ENCODE measurements at regions of chr10 and their contacts with region 1.

Region 1: GRCh38 chr10:42552493-42553407 is 85.6 kb downstream of the ZNF33B start:
- DNase-seq: peak; percentile 89 to 95 (median 91)
- H3K4me3 ChIP-seq: peak overlapping the region; percentile 62 to 99 (median 88)
- H3K4me3 Mint-ChIP-seq: peak overlapping the region; percentile 95 to 98
- H3K27ac ChIP-seq: peak overlapping the region; percentile 1 to 79
- H3K27ac Mint-ChIP-seq: peak overlapping the region; percentile 78 to 90 (median 83)
- H3K4me1 ChIP-seq: peaks cover 15 to 23% of the 10 kb centered on the region in 2 donors
- H3K4me1 Mint-ChIP-seq: peaks cover 28% of the 10 kb centered on the region
- H3K27me3 ChIP-seq: no peaks in the 10 kb centered on the region
- H3K27me3 Mint-ChIP-seq: peaks cover 4 to 10% (median 5%) of the 10 kb centered on the region in 3 donors
- CTCF ChIP-seq: no peak

Region 2: GRCh38 chr10:42454313-42454712 is 98.4 kb before region 1 on chr10:
- intact Hi-C with region 1: no loop called
- DNase-seq: no peak
- H3K4me3 ChIP-seq: no peak overlapping the region
- H3K4me3 Mint-ChIP-seq: no peak overlapping the region
- H3K27ac ChIP-seq: no peak overlapping the region
- H3K27ac Mint-ChIP-seq: no peak overlapping the region
- H3K4me1 ChIP-seq: no peaks in the 10 kb centered on the region
- H3K4me1 Mint-ChIP-seq: no peaks in the 10 kb centered on the region
- H3K27me3 ChIP-seq: no peaks in the 10 kb centered on the region
- H3K27me3 Mint-ChIP-seq: peaks cover 0 to 3% (median 0%) of the 10 kb centered on the region in 3 donors
- CTCF ChIP-seq: no peak

Region 3: DNA sequence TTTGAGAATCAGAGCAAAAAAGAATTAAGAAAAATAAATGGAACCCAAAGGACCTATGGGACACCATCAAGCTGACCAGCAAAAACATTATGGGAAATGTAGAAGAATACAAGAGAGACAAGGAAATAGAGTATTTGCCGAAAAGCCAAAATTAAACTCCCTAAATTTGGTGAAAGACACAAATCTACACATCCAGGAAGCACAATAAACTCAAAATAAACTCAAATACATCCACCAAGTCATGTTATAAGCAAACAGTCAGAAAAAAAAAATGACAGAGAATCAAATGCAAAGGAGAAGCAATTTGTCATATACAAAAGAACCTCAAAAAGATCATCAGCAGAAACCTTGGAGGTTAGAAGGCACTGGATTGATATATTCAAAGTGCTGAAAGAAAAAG is 19.8 kb before region 1 on chr10:
- intact Hi-C with region 1: no loop called
- DNase-seq: no peak
- H3K4me3 ChIP-seq: no peak overlapping the region
- H3K4me3 Mint-ChIP-seq: no peak overlapping the region
- H3K27ac ChIP-seq: no peak overlapping the region
- H3K27ac Mint-ChIP-seq: no peak overlapping the region
- H3K4me1 ChIP-seq: no peaks in the 10 kb centered on the region
- H3K4me1 Mint-ChIP-seq: no peaks in the 10 kb centered on the region
- H3K27me3 ChIP-seq: no peaks in the 10 kb centered on the region
- H3K27me3 Mint-ChIP-seq: no peaks in the 10 kb centered on the region
- CTCF ChIP-seq: no peak

Region 4: DNA sequence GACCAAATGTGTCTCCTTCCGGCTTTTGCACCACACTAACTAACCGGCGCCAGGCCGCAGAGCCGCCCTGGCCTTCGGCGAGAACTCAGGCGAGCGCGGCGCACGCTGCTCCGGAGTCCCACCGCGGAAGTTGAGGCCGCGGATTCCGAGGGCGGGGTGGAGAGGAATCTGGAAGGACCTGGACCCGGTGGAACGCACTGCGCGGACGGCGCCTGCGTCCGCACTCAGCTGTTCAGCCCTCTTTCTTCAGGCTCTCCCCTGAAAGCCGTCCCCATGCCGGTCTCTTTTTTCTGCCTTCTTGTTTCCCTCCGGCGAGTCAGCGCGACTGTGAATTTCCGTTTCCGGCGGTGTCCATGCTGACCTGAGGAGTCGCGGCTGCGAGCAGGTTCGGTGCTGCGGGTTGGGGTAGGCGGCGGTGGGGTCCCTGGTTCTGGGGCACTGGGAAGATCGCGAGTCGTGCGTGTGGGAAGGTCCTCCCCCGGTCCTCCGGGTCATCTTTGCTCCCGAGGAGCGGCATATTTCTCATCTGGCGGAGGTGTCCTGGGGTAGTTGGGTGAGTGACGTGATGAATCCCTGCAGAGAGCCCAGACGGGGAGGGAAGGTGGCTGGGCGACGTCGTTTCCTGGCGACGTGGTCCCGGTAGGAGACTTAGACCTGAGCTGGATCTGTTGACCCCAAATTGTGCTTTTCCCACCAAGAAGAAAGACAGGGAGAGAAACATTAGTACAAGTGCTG is 229.9 kb after region 1 on chr10 and contains the start of gene BMS1:
- intact Hi-C with region 1: loop called in 1 of 2 experiments (anchors 10 kb)
- DNase-seq: peak; percentile 73 to 84 (median 74)
- H3K4me3 ChIP-seq: peak within 1 kb of the TSS; percentile 66 to 91 (median 80)
- H3K4me3 Mint-ChIP-seq: peak within 1 kb of the TSS; percentile 92 to 96
- H3K27ac ChIP-seq: peak within 1 kb of the TSS; percentile 77 to 91
- H3K27ac Mint-ChIP-seq: peak within 1 kb of the TSS; percentile 84 to 94 (median 92)
- H3K4me1 ChIP-seq: peaks cover 13 to 21% of the 10 kb centered on the region in 2 donors
- H3K4me1 Mint-ChIP-seq: peaks cover 19% of the 10 kb centered on the region
- H3K27me3 ChIP-seq: peaks cover 0 to 2% of the 10 kb centered on the region in 2 donors
- H3K27me3 Mint-ChIP-seq: peaks cover 2 to 12% (median 9%) of the 10 kb centered on the region in 3 donors
- CTCF ChIP-seq: no peak
- polyA plus RNA-seq, gene BMS1: 2.4 to 4.6 (median 2.9) TPM

Region 5: DNA sequence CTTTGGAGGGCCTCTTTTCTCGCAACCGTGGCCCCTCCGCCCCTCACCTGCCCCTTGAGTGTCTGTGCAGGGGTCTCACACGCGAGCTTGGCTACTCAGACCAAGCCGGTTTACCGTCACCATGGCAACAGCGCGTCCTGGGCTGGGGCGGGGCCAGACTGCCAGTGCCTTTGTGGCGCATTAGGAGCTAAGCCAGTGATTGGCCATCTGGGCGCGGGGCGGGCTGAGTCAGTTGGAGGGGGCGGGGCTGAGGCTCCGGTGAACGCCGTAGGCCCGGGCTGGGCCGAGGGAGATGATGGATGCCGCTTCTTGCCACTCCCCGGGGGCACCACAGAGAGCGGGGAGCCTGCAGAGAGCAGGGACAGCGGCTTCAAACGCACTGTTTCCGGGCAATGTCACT is 770.0 kb after region 1 on chr10:
- intact Hi-C with region 1: no loop called
- DNase-seq: peak; percentile 86 to 94 (median 94)
- H3K4me3 ChIP-seq: peak overlapping the region in 2 of 3 experiments; percentile 20 to 66
- H3K4me3 Mint-ChIP-seq: peak overlapping the region; percentile 58 to 80
- H3K27ac ChIP-seq: peak overlapping the region in 1 of 2 donors; percentile 36
- H3K27ac Mint-ChIP-seq: peak overlapping the region in 4 of 7 donors; percentile 42 to 89 (median 70)
- H3K4me1 ChIP-seq: peaks cover 16 to 19% of the 10 kb centered on the region in 2 donors
- H3K4me1 Mint-ChIP-seq: peaks cover 23% of the 10 kb centered on the region
- H3K27me3 ChIP-seq: no peaks in the 10 kb centered on the region
- H3K27me3 Mint-ChIP-seq: peaks cover 5 to 15% (median 10%) of the 10 kb centered on the region in 3 donors
- CTCF ChIP-seq: no peak

Region 6: DNA sequence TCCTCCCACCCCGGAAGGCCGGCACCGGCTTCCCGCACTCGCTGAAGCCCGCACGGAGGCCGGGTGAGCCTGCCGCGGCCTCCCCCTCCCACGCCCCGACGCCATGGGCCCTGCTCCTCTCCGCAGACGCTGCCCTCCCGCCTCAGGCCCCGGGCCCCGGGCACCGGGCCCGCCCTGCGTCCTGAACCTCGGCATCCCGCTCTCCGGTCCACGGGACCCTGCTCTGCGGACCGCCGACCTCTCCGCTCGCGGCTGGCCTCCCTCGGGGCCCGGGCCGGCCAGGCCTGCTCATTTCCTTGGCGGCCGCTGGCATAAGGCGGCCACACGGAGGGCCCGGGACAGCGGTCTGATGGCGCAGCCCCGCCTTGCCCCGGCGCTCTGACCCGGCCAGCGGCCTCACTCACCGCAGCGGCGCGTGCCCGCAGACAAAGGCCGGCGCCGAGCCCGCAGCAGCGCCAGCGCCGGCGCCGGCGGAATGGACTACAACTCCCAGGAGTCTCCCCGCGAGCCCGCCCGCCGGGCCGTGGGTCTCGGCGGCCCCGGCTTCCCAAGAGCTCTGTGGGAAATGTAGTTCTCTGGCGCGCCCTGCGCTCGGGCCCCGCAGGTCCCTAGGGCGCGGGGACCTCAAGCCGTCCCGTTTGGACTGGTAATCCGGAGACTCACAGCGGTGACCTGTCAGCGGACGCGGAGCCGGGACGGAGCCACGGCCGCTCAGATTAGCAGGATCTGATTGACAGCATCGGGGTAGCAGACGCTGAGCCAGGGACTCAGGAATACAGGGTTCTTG is 1095.8 kb after region 1 on chr10 and contains the start of gene ZNF32:
- intact Hi-C with region 1: loop called (anchors 10 kb)
- DNase-seq: peak; percentile 73 to 81 (median 77)
- H3K4me3 ChIP-seq: peak within 1 kb of the TSS; percentile 62 to 88 (median 83)
- H3K4me3 Mint-ChIP-seq: peak within 1 kb of the TSS; percentile 93 to 96
- H3K27ac ChIP-seq: peak within 1 kb of the TSS in 1 of 2 donors; percentile 64
- H3K27ac Mint-ChIP-seq: peak within 1 kb of the TSS in 4 of 7 donors; percentile 10 to 77 (median 44)
- H3K4me1 ChIP-seq: peaks cover 10 to 17% of the 10 kb centered on the region in 2 donors
- H3K4me1 Mint-ChIP-seq: peaks cover 14% of the 10 kb centered on the region
- H3K27me3 ChIP-seq: no peaks in the 10 kb centered on the region
- H3K27me3 Mint-ChIP-seq: peaks cover 6 to 12% (median 8%) of the 10 kb centered on the region in 3 donors
- CTCF ChIP-seq: no peak
- polyA plus RNA-seq, gene ZNF32: 16.7 to 33.6 (median 33.0) TPM

Measured in CD14-positive monocyte (primary cell).